Activated CD8-positive, alpha-beta T cell treated with anti-CD3 and anti-CD28 coated beads for 36 hours (primary cell): ENCODE measurements at regions of chr19 and their contacts with region 1.

Region 1: GRCh38 chr19:15418588-15419412 is at the start of gene AKAP8L:
- DNase-seq: peak; percentile 100
- ATAC-seq: peak; percentile 97
- H3K4me3 Mint-ChIP-seq: peak within 1 kb of the TSS; percentile 98
- H3K27ac Mint-ChIP-seq: peak within 1 kb of the TSS; percentile 99
- H3K4me1 Mint-ChIP-seq: peaks cover 36% of the 10 kb centered on the region
- H3K27me3 Mint-ChIP-seq: no peaks in the 10 kb centered on the region
- CTCF ChIP-seq: peak; percentile 87
- total RNA-seq, gene AKAP8L: 83.1 to 88.8 TPM

Region 2: GRCh38 chr19:15379083-15379995 is 39.5 kb before region 1 on chr19 and contains the start of gene AKAP8:
- CTCF ChIA-PET with region 1: interaction called, 27 read pairs
- POLR2A ChIA-PET with region 1: interaction called, 44 read pairs
- intact Hi-C with region 1: no loop called
- DNase-seq: peak; percentile 98
- ATAC-seq: peak; percentile 90
- H3K4me3 Mint-ChIP-seq: peak within 1 kb of the TSS; percentile 86
- H3K27ac Mint-ChIP-seq: peak within 1 kb of the TSS; percentile 99
- H3K4me1 Mint-ChIP-seq: peaks cover 34% of the 10 kb centered on the region
- H3K27me3 Mint-ChIP-seq: no peaks in the 10 kb centered on the region
- CTCF ChIP-seq: no peak
- total RNA-seq, gene AKAP8: 47.6 to 48.2 TPM

Region 3: DNA sequence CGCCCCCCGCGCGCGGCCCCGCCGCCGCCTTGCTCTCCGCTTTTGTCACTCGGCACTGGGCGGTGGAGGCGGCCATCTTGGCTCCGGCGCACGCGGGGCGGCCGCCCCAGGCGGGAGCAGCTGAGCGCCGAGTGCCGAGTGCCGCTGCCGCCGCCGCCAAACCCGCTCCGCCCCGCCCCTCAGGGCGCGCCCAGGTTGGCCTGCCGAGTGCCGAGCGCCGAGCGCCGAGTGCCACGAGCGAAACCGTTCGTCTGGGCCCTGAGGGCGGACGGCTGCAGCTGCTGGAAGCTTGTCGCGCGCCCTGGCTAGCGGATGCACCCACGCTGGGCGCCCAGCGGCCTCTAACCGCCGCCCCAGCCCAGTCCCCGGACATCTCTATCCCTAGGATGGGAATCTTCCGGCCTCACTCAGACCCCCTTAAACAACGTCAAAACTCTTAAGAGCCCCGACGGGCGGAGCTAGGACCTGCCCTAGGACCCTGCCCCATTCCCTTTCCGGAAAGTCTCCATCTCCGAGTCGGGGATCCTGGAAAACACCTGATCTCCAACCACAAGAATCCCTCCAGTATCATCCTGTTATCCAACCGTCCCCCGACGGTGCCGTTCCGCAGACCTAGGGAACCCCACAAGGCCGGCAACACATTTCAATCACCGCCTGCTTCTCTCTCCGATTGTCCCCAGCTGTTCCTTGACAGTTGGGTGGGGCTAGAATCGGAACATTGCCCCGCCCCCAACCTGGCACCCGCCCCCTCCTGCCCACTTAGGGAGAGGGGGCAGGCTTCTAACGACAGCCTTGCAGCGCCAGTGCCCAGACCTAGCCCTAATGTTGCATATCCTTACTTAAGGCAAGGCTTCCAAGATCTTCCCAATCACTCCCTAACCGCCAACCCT is 14.1 kb after region 1 on chr19:
- CTCF ChIA-PET with region 1: interaction called, 34 read pairs
- POLR2A ChIA-PET with region 1: interaction called, 89 read pairs
- intact Hi-C with region 1: no loop called
- DNase-seq: peak; percentile 94
- ATAC-seq: peak; percentile 93
- H3K4me3 Mint-ChIP-seq: peak overlapping the region; percentile 82
- H3K27ac Mint-ChIP-seq: peak overlapping the region; percentile 86
- H3K4me1 Mint-ChIP-seq: peaks cover 28% of the 10 kb centered on the region
- H3K27me3 Mint-ChIP-seq: no peaks in the 10 kb centered on the region
- CTCF ChIP-seq: no peak

Region 4: DNA sequence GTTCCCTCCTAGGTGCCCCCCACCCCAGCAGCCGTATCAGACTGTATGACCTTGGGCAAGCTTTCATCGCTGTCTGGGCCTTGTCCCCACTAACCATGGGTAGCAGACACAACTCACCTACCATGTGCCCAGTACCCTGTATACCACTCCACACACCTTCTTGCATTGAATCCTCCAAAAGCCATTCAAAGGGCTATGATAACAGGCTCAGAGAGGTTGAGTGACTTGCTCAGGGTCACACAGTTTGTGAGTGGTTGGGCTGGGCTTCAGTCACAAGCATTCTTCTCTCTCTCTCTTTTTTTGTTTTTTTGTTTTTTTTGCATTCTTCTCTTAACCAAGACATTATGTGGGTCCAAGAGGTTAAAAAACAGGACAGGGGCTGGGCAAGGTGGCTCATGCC is 42.9 kb after region 1 on chr19:
- CTCF ChIA-PET with region 1: interaction called, 14 read pairs
- POLR2A ChIA-PET with region 1: interaction called, 20 read pairs
- intact Hi-C with region 1: loop called (anchors 5 kb)
- DNase-seq: no peak
- ATAC-seq: no peak
- H3K4me3 Mint-ChIP-seq: peak overlapping the region; percentile 84
- H3K27ac Mint-ChIP-seq: peak overlapping the region; percentile 92
- H3K4me1 Mint-ChIP-seq: peaks cover 33% of the 10 kb centered on the region
- H3K27me3 Mint-ChIP-seq: no peaks in the 10 kb centered on the region
- CTCF ChIP-seq: no peak

Region 5: GRCh38 chr19:15555759-15556633 is 137.2 kb after region 1 on chr19:
- CTCF ChIA-PET with region 1: interaction called, 138 read pairs
- POLR2A ChIA-PET with region 1: interaction called, 35 read pairs
- intact Hi-C with region 1: loop called (anchors 2 kb)
- DNase-seq: peak; percentile 99
- ATAC-seq: peak; percentile 86
- H3K4me3 Mint-ChIP-seq: peak overlapping the region; percentile 74
- H3K27ac Mint-ChIP-seq: peak overlapping the region; percentile 84
- H3K4me1 Mint-ChIP-seq: peaks cover 14% of the 10 kb centered on the region
- H3K27me3 Mint-ChIP-seq: no peaks in the 10 kb centered on the region
- CTCF ChIP-seq: peak; percentile 83